IMR-90 (cell line): ENCODE measurements at regions of chr10 and their contacts with region 1.

Region 1: GRCh38 chr10:84537447-84537931 is 209.1 kb downstream of the CCSER2 start:
- DNase-seq: peak; percentile 59
- ATAC-seq: peak; percentile 63
- H3K4me3 ChIP-seq: no peak overlapping the region
- H3K27ac ChIP-seq: no peak overlapping the region
- H3K4me1 ChIP-seq: peaks cover 8% of the 10 kb centered on the region
- H3K27me3 ChIP-seq: no peaks in the 10 kb centered on the region
- CTCF ChIP-seq: peak; percentile 92
- POLR2A ChIP-seq: no peak
- RAD21 ChIP-seq: peak; percentile 95

Region 2: GRCh38 chr10:84139126-84140035 is 398.1 kb before region 1 on chr10 and contains the start of gene GHITM:
- CTCF ChIA-PET with region 1: no interaction called
- POLR2A ChIA-PET with region 1: no interaction called
- dilution Hi-C with region 1: no loop called
- in situ Hi-C with region 1: loop called (anchors 10 kb)
- intact Hi-C with region 1: no loop called
- DNase-seq: peak; percentile 98
- ATAC-seq: peak; percentile 99
- H3K4me3 ChIP-seq: peak within 1 kb of the TSS; percentile 89
- H3K27ac ChIP-seq: peak within 1 kb of the TSS; percentile 73
- H3K4me1 ChIP-seq: peaks cover 4% of the 10 kb centered on the region
- H3K27me3 ChIP-seq: no peaks in the 10 kb centered on the region
- CTCF ChIP-seq: peak; percentile 43
- POLR2A ChIP-seq: peak; percentile 91
- RAD21 ChIP-seq: no peak
- total RNA-seq, gene GHITM: 185 and 186 TPM in 2 replicates

Region 3: DNA sequence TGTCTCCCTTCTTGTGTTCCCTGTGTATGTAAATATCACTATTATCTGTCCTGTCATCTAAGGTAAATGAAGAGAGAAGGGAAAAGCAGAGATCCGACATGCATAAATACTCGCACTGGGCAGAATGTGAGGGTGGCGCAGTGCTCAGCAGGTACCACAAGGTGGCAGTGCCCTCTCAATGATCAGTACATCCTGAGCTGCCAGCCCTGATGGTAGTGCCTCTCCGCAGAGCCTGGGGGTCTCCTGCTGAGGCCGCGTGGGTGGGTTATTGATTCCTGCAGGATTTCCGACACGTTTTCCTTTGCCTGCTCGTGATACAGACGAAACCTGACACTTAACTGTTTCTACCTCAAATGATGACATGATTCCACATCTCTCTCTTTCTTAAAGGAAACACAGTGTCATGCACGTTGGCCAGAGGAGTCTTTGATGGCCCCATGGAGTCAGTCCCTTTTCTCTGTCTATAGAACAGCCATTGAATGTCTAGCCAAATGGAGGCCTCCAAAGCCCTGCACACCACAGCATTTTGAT is 272.8 kb before region 1 on chr10:
- CTCF ChIA-PET with region 1: interaction called, 54 read pairs
- POLR2A ChIA-PET with region 1: no interaction called
- dilution Hi-C with region 1: no loop called
- in situ Hi-C with region 1: loop called (anchors 5 kb)
- intact Hi-C with region 1: loop called (anchors 1 kb)
- DNase-seq: peak; percentile 66
- ATAC-seq: peak; percentile 99
- H3K4me3 ChIP-seq: no peak overlapping the region
- H3K27ac ChIP-seq: no peak overlapping the region
- H3K4me1 ChIP-seq: no peaks in the 10 kb centered on the region
- H3K27me3 ChIP-seq: peaks cover 3% of the 10 kb centered on the region; the same call in 1 of the 2 replicates
- CTCF ChIP-seq: peak; percentile 96
- POLR2A ChIP-seq: peak; percentile 49; the same call in 1 of the 2 replicates
- RAD21 ChIP-seq: peak; percentile 97

Region 4: DNA sequence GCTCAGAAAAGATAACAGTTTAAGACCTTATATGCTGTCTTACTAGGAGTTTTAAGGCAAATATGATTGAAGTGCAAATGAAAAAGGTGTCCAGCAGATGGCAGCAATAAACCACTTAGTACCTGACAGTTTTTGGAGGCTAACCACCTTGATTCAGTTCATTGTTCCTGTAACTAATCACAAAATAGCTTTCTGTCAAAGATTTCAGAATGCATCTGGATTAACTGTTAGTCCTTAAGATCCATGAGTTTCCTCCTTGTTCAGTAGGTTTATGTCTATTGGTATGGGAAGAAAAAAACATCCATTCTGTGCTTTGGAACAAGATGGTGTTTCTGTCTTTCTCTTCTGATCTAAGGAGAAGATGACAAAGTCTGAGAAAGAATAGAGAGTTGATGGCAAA is 162.5 kb before region 1 on chr10:
- CTCF ChIA-PET with region 1: interaction called, 16 read pairs
- POLR2A ChIA-PET with region 1: no interaction called
- dilution Hi-C with region 1: no loop called
- in situ Hi-C with region 1: no loop called
- intact Hi-C with region 1: loop called (anchors 1 kb)
- DNase-seq: peak; percentile 69
- ATAC-seq: 0 out of 2 replicates have a peak, but pooled peaks have one; percentile 32
- H3K4me3 ChIP-seq: no peak overlapping the region
- H3K27ac ChIP-seq: no peak overlapping the region
- H3K4me1 ChIP-seq: no peaks in the 10 kb centered on the region
- H3K27me3 ChIP-seq: no peaks in the 10 kb centered on the region
- CTCF ChIP-seq: peak; percentile 66
- POLR2A ChIP-seq: no peak
- RAD21 ChIP-seq: peak; percentile 82

Region 5: DNA sequence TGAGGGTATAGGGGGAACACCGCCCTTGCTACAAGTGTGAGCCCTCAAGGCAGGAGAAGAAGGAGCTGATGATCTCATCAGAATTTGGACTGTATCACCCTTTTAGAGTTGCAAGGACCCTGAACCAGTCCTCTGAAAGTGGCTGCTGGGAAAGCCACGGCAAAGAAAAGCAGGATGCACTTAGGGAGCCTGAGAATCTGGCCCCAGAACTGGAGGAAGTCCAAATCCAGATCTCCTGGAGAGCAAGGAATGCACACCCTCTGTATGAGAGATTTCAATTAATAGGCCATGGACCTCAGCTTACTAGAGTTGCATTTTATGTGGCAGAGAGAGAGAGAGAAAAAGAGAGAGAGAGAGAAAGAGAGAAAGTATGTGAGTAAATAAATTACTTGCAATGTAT is 453.8 kb after region 1 on chr10:
- CTCF ChIA-PET with region 1: no interaction called
- POLR2A ChIA-PET with region 1: no interaction called
- dilution Hi-C with region 1: no loop called
- in situ Hi-C with region 1: no loop called
- intact Hi-C with region 1: no loop called
- DNase-seq: no peak
- ATAC-seq: no peak
- H3K4me3 ChIP-seq: no peak overlapping the region
- H3K27ac ChIP-seq: no peak overlapping the region
- H3K4me1 ChIP-seq: no peaks in the 10 kb centered on the region
- H3K27me3 ChIP-seq: no peaks in the 10 kb centered on the region
- CTCF ChIP-seq: no peak
- POLR2A ChIP-seq: no peak
- RAD21 ChIP-seq: no peak

Region 6: GRCh38 chr10:86376852-86377796 is 1839.6 kb after region 1 on chr10:
- CTCF ChIA-PET with region 1: interaction called, 6 read pairs
- POLR2A ChIA-PET with region 1: no interaction called
- dilution Hi-C with region 1: no loop called
- in situ Hi-C with region 1: loop called (anchors 5 kb)
- intact Hi-C with region 1: loop called (anchors 1 kb)
- DNase-seq: peak; percentile 28
- ATAC-seq: peak; percentile 99
- H3K4me3 ChIP-seq: no peak overlapping the region
- H3K27ac ChIP-seq: no peak overlapping the region
- H3K4me1 ChIP-seq: no peaks in the 10 kb centered on the region
- H3K27me3 ChIP-seq: peaks cover 48% of the 10 kb centered on the region
- CTCF ChIP-seq: peak; percentile 91
- POLR2A ChIP-seq: no peak; the same call in 1 of the 2 replicates
- RAD21 ChIP-seq: peak; percentile 88